Activated CD4-positive, alpha-beta memory T cell treated with anti-CD3 and anti-CD28 coated beads for 36 hours (primary cell): ENCODE measurements at regions of chr9 and their contacts with region 1.

Region 1: GRCh38 chr9:113657703-113658544 is 194.4 kb downstream of the RGS3 start:
- DNase-seq: peak; percentile 87
- H3K4me3 Mint-ChIP-seq: no peak overlapping the region
- H3K27ac Mint-ChIP-seq: no peak overlapping the region
- H3K4me1 Mint-ChIP-seq: peaks cover 6% of the 10 kb centered on the region
- H3K27me3 Mint-ChIP-seq: peaks cover 4% of the 10 kb centered on the region

Region 2: DNA sequence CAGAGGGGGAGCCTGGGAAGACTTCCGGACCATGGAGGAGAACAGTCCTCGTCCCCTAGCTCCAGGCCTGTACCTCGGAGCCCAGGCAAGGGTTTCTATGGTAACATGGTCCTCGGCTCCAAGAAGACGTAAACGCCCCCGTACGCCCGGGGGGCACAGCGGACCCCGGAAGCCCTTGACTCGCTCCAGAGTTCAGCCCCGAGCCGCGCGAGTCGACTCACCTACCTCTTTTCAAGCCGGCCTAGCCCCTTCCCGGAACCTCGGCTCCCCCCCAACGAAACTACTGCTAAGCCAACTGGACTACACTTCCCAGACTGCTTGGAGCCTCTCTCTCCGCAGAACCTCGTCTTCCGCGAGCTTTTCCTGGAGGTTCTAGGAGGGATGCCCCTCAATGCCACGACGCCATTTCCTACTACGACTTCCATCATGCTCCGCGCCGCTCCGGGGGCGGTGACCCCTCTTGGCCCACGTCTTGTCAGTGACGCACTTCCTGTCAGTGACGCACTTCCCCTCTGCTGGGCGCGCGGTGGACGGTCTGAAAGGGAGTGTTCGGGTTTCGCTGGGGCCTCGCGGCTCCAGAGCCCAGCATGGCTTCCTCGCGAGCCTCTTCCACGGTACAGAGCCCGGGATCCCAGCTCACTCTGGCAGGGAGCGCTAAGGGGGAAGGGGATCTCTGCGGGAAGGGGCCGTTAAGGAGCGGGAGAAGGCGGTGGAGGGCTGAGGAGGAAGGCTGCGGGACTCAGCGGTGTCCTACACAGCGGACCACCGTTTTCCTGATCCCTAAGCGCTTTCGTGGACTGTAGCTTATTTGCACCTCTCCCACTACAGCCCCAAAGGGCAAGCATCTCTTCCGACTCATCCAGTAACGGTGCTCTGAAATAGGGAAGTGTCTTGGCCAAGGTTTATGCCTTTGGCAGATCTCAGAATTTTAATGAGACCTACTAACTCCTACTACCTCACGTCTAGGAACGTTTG is 382.5 kb before region 1 on chr9 and contains the starts of genes CDC26 and PRPF4:
- CTCF ChIA-PET with region 1: interaction called, 39 read pairs
- POLR2A ChIA-PET with region 1: no interaction called
- intact Hi-C with region 1: loop called (anchors 1 kb)
- DNase-seq: peak; percentile 97
- H3K4me3 Mint-ChIP-seq: no peak within 1 kb of the TSS
- H3K27ac Mint-ChIP-seq: no peak within 1 kb of the TSS
- H3K4me1 Mint-ChIP-seq: peaks cover 35% of the 10 kb centered on the region
- H3K27me3 Mint-ChIP-seq: no peaks in the 10 kb centered on the region
- total RNA-seq, gene CDC26: 49.8 to 50.9 TPM
- total RNA-seq, gene PRPF4: 47.6 to 48.7 TPM

Region 3: DNA sequence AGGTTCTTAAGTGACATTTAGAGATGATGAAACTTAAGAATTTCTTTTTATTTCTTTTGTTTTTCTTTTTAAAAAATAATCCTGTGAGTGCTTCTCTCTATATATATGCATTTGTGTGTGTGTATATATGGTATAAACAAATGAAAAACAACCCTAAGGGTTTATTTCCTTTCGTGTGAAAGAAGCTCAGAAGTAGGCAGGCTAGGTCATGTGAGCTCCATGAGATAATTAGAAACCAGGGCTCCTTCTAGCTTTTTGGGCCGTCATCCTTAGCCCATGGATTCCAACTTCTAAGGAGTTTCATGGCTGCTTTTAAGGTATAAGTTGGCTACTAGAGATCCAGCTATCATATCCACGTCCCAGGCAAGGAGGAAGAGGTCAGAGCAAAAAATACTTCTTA is 236.2 kb before region 1 on chr9:
- CTCF ChIA-PET with region 1: interaction called, 12 read pairs
- POLR2A ChIA-PET with region 1: no interaction called
- intact Hi-C with region 1: no loop called
- DNase-seq: no peak
- H3K4me3 Mint-ChIP-seq: no peak overlapping the region
- H3K27ac Mint-ChIP-seq: no peak overlapping the region
- H3K4me1 Mint-ChIP-seq: no peaks in the 10 kb centered on the region
- H3K27me3 Mint-ChIP-seq: peaks cover 6% of the 10 kb centered on the region

Region 4: GRCh38 chr9:113492343-113493212 is 165.3 kb before region 1 on chr9:
- CTCF ChIA-PET with region 1: interaction called, 10 read pairs
- POLR2A ChIA-PET with region 1: no interaction called
- intact Hi-C with region 1: no loop called
- DNase-seq: no peak
- H3K4me3 Mint-ChIP-seq: no peak overlapping the region
- H3K27ac Mint-ChIP-seq: no peak overlapping the region
- H3K4me1 Mint-ChIP-seq: no peaks in the 10 kb centered on the region
- H3K27me3 Mint-ChIP-seq: no peaks in the 10 kb centered on the region

Region 5: DNA sequence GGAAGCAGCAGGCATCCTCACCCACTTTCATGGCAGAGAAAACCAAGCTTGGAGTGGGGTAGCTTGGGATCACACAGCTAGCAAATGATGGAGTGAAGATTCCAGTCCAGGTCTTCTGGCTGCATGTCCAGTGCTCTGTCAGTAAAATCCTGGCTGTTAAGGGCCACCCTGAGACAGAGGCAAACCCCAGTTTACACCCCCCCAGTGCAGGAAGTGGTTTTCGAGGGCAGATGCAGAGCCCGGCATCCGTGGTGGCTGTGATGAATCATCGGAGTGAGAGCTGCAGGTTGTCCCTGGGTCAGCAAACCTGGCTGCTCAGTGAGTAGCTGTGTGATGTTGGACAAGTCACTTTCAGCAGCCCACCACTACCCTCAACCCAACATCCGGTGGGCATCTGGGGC is 79.0 kb before region 1 on chr9:
- CTCF ChIA-PET with region 1: interaction called, 48 read pairs
- POLR2A ChIA-PET with region 1: no interaction called
- intact Hi-C with region 1: no loop called
- DNase-seq: peak; percentile 96
- H3K4me3 Mint-ChIP-seq: peak overlapping the region; percentile 85
- H3K27ac Mint-ChIP-seq: peak overlapping the region; percentile 96
- H3K4me1 Mint-ChIP-seq: peaks cover 75% of the 10 kb centered on the region
- H3K27me3 Mint-ChIP-seq: no peaks in the 10 kb centered on the region

Region 6: DNA sequence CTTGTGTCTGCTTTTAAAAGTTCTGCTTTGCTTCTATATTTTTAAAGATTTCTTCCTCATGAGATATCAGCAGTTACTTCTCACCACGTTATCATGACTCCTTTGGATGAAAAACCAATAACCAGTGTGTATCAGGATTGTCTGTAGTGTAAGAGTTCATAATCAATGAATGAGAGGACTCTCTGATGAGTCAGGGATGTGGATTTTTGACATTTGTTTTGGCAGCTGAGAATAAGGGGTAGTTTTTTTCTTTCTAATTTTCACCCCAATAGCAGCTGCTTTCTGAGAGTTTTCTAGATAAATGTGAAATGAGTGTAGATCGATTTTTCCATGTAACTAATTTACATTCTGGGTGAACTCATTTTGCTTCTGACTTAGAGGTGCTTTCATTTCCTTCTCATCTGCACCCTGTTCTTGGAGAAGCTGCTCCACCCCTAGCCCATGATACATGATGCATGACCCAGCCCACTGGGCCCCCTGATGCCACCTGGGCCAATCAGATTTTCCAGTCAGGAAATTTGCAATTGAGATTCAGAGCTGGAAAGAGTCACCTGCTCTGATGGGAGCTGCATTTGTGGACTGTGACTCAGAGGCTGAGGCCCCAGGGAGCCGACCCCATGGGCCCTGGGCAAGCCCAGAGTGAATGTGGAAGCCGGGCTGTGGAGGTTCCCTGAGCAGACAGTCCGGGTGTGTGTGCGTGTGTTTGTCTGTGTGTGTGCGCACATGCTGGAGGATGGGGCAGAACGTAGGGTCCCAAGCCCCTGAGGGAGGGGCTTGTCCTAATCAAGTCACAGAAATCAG is 35.1 kb before region 1 on chr9:
- CTCF ChIA-PET with region 1: interaction called, 72 read pairs
- POLR2A ChIA-PET with region 1: interaction called, 3 read pairs
- intact Hi-C with region 1: no loop called
- DNase-seq: peak; percentile 92
- H3K4me3 Mint-ChIP-seq: peak overlapping the region; percentile 63
- H3K27ac Mint-ChIP-seq: peak overlapping the region; percentile 99
- H3K4me1 Mint-ChIP-seq: peaks cover 54% of the 10 kb centered on the region
- H3K27me3 Mint-ChIP-seq: no peaks in the 10 kb centered on the region